Dorsolateral prefrontal cortex (tissue), 120 donors: ENCODE measurements at regions of chr7 and their contacts with region 1.

Region 1: DNA sequence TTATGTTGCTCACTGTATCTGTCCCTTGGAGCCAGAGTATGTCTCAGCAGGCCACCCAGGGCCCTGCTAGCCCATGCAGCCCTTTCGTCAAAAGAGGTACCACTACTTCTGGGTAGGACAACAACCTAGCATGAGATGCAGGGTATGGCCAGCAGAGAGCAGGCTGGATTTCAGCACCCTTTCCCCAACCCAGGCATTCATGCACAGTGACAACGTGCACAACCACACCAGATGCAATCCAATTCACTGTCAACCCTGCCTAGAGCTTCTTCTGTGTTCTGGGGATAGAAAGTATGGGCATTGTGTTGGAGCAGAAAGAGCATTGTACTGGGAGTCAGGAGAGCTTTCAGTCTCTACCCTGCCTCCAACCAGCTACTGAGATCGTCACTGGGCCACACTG is 37.9 kb downstream of the JAZF1 start:
- DNase-seq: peak in 8 of 10 donors; percentile 19 to 62 (median 48)
- H3K4me3 ChIP-seq: peak overlapping the region in 1 of 59 donors; percentile 5
- H3K27ac ChIP-seq: peak overlapping the region in 45 of 59 donors; percentile 11 to 89 (median 62)
- H3K27me3 ChIP-seq: no peaks in the 10 kb centered on the region
- CTCF ChIP-seq: peak in 52 of 56 donors; percentile 23 to 79 (median 48)

Region 2: DNA sequence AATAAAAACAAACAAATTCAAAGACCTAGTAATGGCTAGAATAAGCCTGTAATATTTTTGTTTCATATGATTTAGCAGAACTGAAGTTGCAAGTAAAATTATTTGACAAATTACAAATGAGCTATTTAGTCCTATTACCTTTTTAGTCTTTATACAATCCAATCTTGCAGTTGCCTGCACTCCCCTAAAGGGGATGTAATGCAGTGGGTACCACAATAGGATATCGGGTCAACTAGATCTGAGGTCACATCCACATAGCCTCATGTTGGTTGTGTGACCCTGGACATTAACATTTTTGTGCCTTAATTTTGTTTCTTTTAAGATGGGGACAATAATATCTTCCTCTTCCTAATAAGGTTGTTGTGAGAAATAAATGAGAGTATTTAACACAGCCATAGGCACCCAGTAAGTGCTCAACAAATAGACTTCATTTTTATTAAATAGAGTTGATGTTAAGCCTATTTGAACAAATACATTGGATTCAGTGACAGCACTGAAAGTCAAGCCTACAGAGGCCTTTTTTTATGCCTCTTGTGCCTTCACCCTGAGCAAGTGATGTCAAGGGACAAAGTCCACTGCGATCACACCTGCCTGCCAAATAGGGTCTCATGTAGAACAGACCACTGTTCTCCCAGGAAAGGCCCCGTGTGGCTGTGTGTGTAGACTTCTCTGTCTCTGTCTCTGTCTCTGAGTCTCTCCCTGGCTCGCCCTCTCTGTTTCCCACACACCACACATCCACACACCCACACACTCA is 775.3 kb before region 1 on chr7:
- intact Hi-C with region 1: no loop called
- DNase-seq: no peak
- H3K4me3 ChIP-seq: no peak overlapping the region
- H3K27ac ChIP-seq: no peak overlapping the region
- H3K27me3 ChIP-seq: peaks cover 0 to 6% (median 0%) of the 10 kb centered on the region in 45 donors
- CTCF ChIP-seq: no peak

Region 3: GRCh38 chr7:28272461-28272877 is 129.8 kb after region 1 on chr7:
- intact Hi-C with region 1: loop called in 1 of 2 experiments (anchors 2 kb)
- DNase-seq: peak; percentile 26 to 71 (median 58)
- H3K4me3 ChIP-seq: peak overlapping the region in 38 of 59 donors; percentile 2 to 56 (median 28)
- H3K27ac ChIP-seq: no peak overlapping the region
- H3K27me3 ChIP-seq: no peaks in the 10 kb centered on the region
- CTCF ChIP-seq: peak; percentile 22 to 82 (median 70)